K562 (cell line): ENCODE measurements at regions of chr5 and their contacts with region 1.

Region 1: DNA sequence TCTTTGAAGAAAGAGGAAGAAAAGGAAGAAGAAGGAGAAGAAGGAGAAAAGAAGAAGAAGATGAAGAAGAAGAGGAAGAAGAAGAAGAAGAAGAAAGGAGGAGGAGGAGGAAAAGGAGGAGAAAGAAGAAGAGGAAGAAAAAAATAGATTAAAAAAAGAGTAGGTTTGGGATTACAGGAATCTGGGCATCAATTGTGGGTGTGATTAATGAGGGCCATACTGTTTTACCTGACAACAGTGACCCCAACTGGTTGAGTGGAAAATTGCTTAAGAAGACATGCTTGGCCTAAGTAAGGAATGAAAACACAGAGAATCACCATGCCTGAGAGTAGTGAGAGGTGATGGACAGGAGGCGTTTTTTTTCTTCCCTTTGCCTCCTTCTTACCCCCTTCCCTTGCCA is 114.6 kb downstream of the FAM170A start:
- DNase-seq: peak; percentile 28 to 69 (median 40)
- ATAC-seq: peak; percentile 95
- H3K4me3 ChIP-seq: no peak overlapping the region
- H3K27ac ChIP-seq: no peak overlapping the region
- H3K4me1 ChIP-seq: peaks cover 0 to 3% of the 10 kb centered on the region in 2 experiments; a peak in 1 of 5 replicates
- H3K27me3 ChIP-seq: no peaks in the 10 kb centered on the region
- CTCF ChIP-seq: peak; percentile 54 to 68 (median 64); a peak in 5 of 6 replicates
- EP300 ChIP-seq: no peak
- POLR2A ChIP-seq: no peak
- RAD21 ChIP-seq: peak; percentile 51 to 77

Region 2: GRCh38 chr5:119435436-119436132 is 308.3 kb before region 1 on chr5:
- CTCF ChIA-PET with region 1: no interaction called
- POLR2A ChIA-PET with region 1: no interaction called
- in situ Hi-C with region 1: no loop called
- intact Hi-C with region 1: loop called (anchors 10 kb)
- DNase-seq: peak; percentile 31 to 81 (median 40)
- ATAC-seq: peak; percentile 91
- H3K4me3 ChIP-seq: no peak overlapping the region
- H3K27ac ChIP-seq: no peak overlapping the region
- H3K4me1 ChIP-seq: peaks cover 0 to 15% of the 10 kb centered on the region in 2 experiments; a peak in 4 of 5 replicates
- H3K27me3 ChIP-seq: no peaks in the 10 kb centered on the region
- CTCF ChIP-seq: peak; percentile 73 to 82 (median 80)
- EP300 ChIP-seq: no peak
- POLR2A ChIP-seq: no peak
- RAD21 ChIP-seq: peak; percentile 66 to 75

Region 3: DNA sequence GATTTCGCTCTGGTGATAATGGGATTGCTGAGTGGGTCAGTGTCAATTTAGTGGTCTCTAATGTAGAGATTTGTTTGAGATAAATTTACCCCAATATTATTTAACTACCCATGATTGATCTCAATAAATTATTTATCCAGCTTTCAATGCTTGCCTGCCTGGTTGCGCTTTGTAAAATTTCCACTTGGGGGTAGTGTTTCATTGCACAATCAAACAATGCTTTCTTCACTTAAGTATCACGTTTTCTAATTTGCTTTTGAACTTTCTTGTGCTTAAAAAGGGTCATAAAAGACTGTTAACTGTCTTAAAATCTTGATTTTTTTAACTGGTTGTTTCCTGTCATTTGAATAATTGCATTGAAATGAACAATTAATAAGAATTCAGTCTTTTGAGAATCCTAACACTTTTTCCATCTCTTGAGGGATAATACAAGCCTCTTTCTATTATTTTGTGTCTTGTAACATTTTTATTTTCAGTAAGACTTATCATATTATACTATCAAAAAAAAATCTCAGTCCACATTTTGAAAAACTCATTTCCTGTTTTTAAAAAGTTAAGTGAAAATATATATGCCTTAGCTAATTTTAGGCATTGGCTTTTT is 273.0 kb before region 1 on chr5:
- CTCF ChIA-PET with region 1: no interaction called
- POLR2A ChIA-PET with region 1: no interaction called
- in situ Hi-C with region 1: no loop called
- intact Hi-C with region 1: loop called (anchors 1 kb)
- DNase-seq: peak in 3 of 4 experiments; percentile 11 to 42 (median 14)
- ATAC-seq: peak; percentile 62; the same call in 2 of the 3 replicates
- H3K4me3 ChIP-seq: no peak overlapping the region
- H3K27ac ChIP-seq: no peak overlapping the region
- H3K4me1 ChIP-seq: no peaks in the 10 kb centered on the region
- H3K27me3 ChIP-seq: no peaks in the 10 kb centered on the region
- CTCF ChIP-seq: peak; percentile 30 to 66 (median 54); a peak in 5 of 6 replicates
- EP300 ChIP-seq: no peak
- POLR2A ChIP-seq: no peak
- RAD21 ChIP-seq: peak; percentile 46 to 72